ENCODE measurements at regions of chr22 and their contacts with region 1.

Region 1: GRCh38 chr22:46542011-46542985 is 4.9 kb upstream of the CELSR1 start:
- DNase-seq: peak; percentile 62 to 92 (median 77)
- ATAC-seq: peak; percentile 91 to 96 (median 92)
- H3K4me3 ChIP-seq: no peak overlapping the region
- H3K27ac ChIP-seq: no peak overlapping the region
- H3K4me1 ChIP-seq: peaks cover 0 to 11% (median 0%) of the 10 kb centered on the region in 3 donors
- H3K27me3 ChIP-seq: peaks cover 0 to 6% (median 0%) of the 10 kb centered on the region in 4 donors
- CTCF ChIP-seq: peak; percentile 78 to 93 (median 90)

Region 2: DNA sequence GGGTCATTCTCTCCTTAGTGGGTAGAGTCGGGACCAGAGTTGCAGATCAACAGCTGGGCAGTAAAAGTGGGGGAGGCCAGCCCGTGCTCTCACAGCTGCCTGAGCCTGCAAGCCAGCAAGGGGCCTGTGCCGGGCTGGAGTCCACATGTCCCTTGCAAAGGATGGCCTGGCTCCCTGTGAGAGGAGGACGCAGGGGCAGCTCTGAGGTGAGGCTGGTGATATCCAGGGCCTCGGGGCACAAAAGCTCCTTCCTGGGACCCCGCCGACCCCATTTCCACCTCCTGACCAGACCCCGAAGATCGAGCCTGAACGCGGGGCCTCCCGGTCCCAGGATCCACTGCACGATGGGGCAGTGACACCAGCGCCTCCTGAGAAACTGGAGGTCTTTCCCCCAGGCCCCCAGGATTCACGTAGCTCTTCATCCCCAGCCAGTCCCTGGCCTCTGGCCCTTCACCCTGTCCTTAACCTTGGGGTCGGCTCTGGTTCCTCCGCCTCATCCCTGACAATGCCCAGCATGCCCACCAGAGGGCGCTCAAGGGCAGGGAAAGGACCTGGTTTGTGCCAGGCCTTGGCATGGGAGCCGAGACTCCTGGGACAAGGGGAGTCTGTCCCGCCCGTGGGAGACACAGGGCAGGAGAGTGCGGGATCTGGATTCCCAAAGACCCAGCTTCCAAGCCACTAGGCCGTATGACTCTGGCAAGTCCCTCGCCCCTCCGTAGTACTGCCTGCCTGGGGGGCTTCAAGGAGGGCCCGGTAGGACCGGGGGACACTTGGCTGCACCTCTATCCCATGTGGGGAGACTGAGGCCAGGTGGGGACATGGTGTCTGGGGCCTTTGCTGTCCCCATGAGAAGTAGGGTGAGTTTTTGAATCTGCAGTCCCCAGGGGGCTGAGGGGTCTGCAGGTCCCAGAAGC is 547.5 kb before region 1 on chr22:
- intact Hi-C with region 1: loop called in 1 of 3 experiments (anchors 10 kb)
- DNase-seq: peak; percentile 67 to 99 (median 90)
- ATAC-seq: peak; percentile 76 to 81 (median 76)
- H3K4me3 ChIP-seq: no peak overlapping the region
- H3K27ac ChIP-seq: no peak overlapping the region
- H3K4me1 ChIP-seq: peaks cover 0 to 5% (median 0%) of the 10 kb centered on the region in 3 donors
- H3K27me3 ChIP-seq: no peaks in the 10 kb centered on the region
- CTCF ChIP-seq: peak; percentile 96 to 99 (median 98)

Region 3: GRCh38 chr22:46335201-46336118 is 206.8 kb before region 1 on chr22 and contains the start of gene TRMU:
- intact Hi-C with region 1: no loop called
- DNase-seq: peak; percentile 81 to 95 (median 88)
- ATAC-seq: peak; percentile 94 to 97 (median 96)
- H3K4me3 ChIP-seq: peak within 1 kb of the TSS; percentile 53 to 96 (median 86)
- H3K27ac ChIP-seq: peak within 1 kb of the TSS; percentile 75 to 91 (median 87)
- H3K4me1 ChIP-seq: peaks cover 0 to 11% (median 5%) of the 10 kb centered on the region in 3 donors
- H3K27me3 ChIP-seq: no peaks in the 10 kb centered on the region
- CTCF ChIP-seq: no peak
- total RNA-seq, gene TRMU: 15.0 to 27.6 (median 20.8) TPM

Region 4: GRCh38 chr22:46355371-46355995 is 186.8 kb before region 1 on chr22:
- intact Hi-C with region 1: loop called in 1 of 3 experiments (anchors 10 kb)
- DNase-seq: peak; percentile 46 to 89 (median 78)
- ATAC-seq: peak; percentile 26 to 46 (median 34)
- H3K4me3 ChIP-seq: no peak overlapping the region
- H3K27ac ChIP-seq: no peak overlapping the region
- H3K4me1 ChIP-seq: peaks cover 7 to 13% (median 10%) of the 10 kb centered on the region in 3 donors
- H3K27me3 ChIP-seq: no peaks in the 10 kb centered on the region
- CTCF ChIP-seq: peak; percentile 67 to 73 (median 68)

Region 5: DNA sequence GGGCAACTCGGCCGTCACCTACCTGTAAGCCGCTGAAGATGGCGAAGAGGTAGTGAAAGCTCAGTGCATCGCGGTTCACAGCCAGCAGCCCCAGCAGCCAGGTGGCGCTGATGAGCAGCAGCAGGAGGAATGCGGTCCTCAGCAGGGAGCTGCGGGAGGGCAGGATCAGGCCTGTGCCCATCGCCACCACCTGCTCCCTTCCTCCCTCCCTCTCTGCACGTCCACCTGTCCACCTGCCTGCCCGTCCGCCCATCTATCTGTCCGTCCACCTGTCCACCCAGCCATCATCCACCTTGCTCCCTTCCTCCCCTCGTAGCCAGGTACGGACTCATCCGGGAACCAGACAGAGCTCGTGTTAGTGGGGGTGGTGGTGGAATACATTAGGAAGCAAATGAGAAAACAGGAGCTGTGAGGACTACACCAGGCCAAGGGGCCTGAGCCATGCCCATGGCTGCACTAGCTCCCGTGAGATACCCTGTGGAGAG is 174.5 kb before region 1 on chr22:
- intact Hi-C with region 1: loop called in 1 of 3 experiments (anchors 5 kb)
- DNase-seq: peak; percentile 67 to 93 (median 86)
- ATAC-seq: peak; percentile 83 to 91 (median 89)
- H3K4me3 ChIP-seq: peak overlapping the region in 1 of 4 donors; percentile 20
- H3K27ac ChIP-seq: no peak overlapping the region
- H3K4me1 ChIP-seq: no peaks in the 10 kb centered on the region
- H3K27me3 ChIP-seq: no peaks in the 10 kb centered on the region
- CTCF ChIP-seq: peak; percentile 79 to 90 (median 86)